MCF 10A (cell line): ENCODE measurements at regions of chr7 and their contacts with region 1.

Region 1: GRCh38 chr7:23055582-23056178 is 41.8 kb upstream of the HYCC1 start:
- DNase-seq: peak; percentile 79
- H3K4me3 Mint-ChIP-seq: no peak overlapping the region
- H3K27ac Mint-ChIP-seq: no peak overlapping the region
- H3K4me1 Mint-ChIP-seq: peaks cover 6% of the 10 kb centered on the region
- H3K27me3 Mint-ChIP-seq: no peaks in the 10 kb centered on the region
- CTCF ChIP-seq: peak; percentile 92

Region 2: GRCh38 chr7:22559829-22560489 is 495.7 kb before region 1 on chr7:
- CTCF ChIA-PET with region 1: interaction called, 120 read pairs
- POLR2A ChIA-PET with region 1: no interaction called
- intact Hi-C with region 1: loop called (anchors 1 kb)
- DNase-seq: peak; percentile 85
- H3K4me3 Mint-ChIP-seq: no peak overlapping the region
- H3K27ac Mint-ChIP-seq: no peak overlapping the region
- H3K4me1 Mint-ChIP-seq: peaks cover 25% of the 10 kb centered on the region
- H3K27me3 Mint-ChIP-seq: peaks cover 7% of the 10 kb centered on the region
- CTCF ChIP-seq: peak; percentile 85

Region 3: DNA sequence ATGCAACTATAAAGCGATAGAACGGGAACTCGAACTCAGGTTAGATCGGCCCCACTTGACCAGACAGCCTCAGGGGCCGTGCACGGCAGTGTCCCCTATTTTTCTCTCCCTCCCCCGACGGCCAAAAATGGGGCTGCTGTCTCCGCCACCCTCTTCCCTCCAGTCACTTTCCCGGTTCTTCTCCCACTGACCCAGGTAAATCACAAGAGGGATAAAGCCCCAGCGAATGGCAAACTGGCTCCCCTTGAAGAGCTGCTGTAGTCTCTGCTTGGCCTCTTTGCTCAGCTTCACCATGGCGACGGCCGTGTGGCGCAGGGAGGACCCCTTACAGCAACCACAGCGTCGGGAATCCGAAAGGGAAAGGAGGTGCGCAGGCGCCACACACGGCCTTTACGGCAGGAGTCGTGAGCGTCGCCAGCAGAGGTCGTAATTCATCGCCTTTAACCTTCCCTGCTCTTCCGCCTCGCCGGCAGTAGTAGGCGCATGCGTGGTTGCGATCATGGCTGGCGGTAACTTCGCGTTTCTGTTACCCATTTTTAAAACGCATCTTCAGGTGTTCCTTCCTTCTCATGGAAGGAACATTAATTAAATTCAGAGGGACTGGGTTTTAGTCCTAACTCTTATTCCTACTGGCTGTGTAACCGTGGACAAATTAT is 233.1 kb before region 1 on chr7 and contains the start of gene TOMM7:
- CTCF ChIA-PET with region 1: interaction called, 18 read pairs
- POLR2A ChIA-PET with region 1: interaction called, 5 read pairs
- intact Hi-C with region 1: loop called (anchors 2 kb)
- DNase-seq: peak; percentile 94
- H3K4me3 Mint-ChIP-seq: peak within 1 kb of the TSS; percentile 94
- H3K27ac Mint-ChIP-seq: peak within 1 kb of the TSS; percentile 98
- H3K4me1 Mint-ChIP-seq: peaks cover 13% of the 10 kb centered on the region
- H3K27me3 Mint-ChIP-seq: no peaks in the 10 kb centered on the region
- CTCF ChIP-seq: no peak
- total RNA-seq, gene TOMM7: 376 and 409 TPM in 2 replicates

Region 4: DNA sequence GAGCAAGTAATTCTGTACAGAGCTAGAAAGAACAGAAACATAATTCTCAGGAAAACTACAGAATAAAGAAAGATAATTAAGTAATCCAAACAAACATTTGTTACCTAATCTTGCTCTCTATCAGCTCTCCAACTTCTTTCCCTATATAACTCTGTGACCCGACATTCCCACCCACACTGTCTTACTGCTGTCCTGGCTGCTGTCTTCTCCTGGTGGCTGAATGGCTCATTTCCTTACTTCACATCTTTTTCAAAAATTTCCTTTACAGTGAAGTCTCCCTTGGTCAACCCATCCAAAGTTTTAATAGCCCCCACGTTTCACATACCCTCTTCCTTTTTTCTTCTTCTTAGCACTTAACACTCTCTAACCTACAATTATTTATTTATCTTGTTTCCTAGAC is 105.7 kb before region 1 on chr7:
- CTCF ChIA-PET with region 1: interaction called, 11 read pairs
- POLR2A ChIA-PET with region 1: no interaction called
- intact Hi-C with region 1: no loop called
- DNase-seq: no peak
- H3K4me3 Mint-ChIP-seq: no peak overlapping the region
- H3K27ac Mint-ChIP-seq: peak overlapping the region; percentile 2
- H3K4me1 Mint-ChIP-seq: no peaks in the 10 kb centered on the region
- H3K27me3 Mint-ChIP-seq: no peaks in the 10 kb centered on the region
- CTCF ChIP-seq: no peak

Region 5: DNA sequence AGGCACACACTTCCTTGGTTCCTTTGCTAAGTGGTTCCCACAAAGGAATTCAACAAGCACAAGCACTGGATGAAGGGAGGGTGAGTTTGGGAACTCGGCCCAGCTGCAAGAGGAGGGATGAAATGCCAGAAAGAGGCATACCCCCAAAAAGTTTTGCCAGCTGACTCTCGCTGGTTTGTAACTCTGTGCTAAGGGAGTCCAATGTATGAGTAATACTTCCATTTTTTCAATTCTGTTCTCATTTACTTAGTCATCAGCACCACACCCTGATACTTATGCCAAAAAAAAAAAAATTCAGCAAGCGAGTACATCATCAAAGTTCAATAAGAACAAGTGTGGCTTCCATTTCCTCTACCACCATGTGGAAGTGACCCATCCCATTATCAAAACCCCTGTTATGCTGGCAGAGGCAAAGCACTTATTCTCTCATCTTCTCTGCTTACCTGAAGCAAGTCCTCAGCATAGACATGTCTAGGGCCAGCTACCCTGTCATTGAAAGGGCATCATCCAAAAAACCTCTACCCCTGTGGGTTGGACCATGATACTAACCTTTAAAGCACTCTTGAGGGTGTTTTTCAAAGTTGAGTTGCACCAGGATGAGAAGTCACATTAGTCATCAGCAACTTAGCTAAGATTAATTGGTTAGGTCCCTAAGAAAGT is 34.8 kb before region 1 on chr7:
- CTCF ChIA-PET with region 1: interaction called, 31 read pairs
- POLR2A ChIA-PET with region 1: interaction called, 8 read pairs
- intact Hi-C with region 1: no loop called
- DNase-seq: peak; percentile 79
- H3K4me3 Mint-ChIP-seq: peak overlapping the region; percentile 52
- H3K27ac Mint-ChIP-seq: peak overlapping the region; percentile 91
- H3K4me1 Mint-ChIP-seq: peaks cover 41% of the 10 kb centered on the region
- H3K27me3 Mint-ChIP-seq: no peaks in the 10 kb centered on the region
- CTCF ChIP-seq: no peak

Region 6: DNA sequence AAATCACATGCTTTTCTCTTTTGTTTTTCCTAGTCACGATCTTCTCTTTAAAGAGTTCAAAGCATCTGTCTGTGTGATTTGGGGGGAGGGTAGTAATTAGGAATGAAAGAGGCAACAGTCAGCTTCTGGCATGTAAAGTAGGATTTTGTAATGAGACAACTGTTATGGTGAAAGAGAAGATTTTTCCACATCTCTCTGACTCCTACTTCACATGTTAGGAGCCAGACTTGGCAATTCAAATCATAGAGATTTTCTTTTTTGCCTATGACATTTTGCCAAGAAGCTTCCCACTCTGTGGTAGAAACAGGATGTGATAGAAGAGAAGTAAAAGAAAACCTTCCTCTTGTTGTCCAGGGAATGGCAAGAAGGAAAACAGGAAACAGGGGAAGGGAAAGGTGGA is 11.6 kb after region 1 on chr7:
- CTCF ChIA-PET with region 1: interaction called, 11 read pairs
- POLR2A ChIA-PET with region 1: no interaction called
- intact Hi-C with region 1: no loop called
- DNase-seq: peak; percentile 5
- H3K4me3 Mint-ChIP-seq: no peak overlapping the region
- H3K27ac Mint-ChIP-seq: no peak overlapping the region
- H3K4me1 Mint-ChIP-seq: no peaks in the 10 kb centered on the region
- H3K27me3 Mint-ChIP-seq: no peaks in the 10 kb centered on the region
- CTCF ChIP-seq: no peak